Calu3 (cell line): ENCODE measurements at regions of chrX and their contacts with region 1.

Region 1: DNA sequence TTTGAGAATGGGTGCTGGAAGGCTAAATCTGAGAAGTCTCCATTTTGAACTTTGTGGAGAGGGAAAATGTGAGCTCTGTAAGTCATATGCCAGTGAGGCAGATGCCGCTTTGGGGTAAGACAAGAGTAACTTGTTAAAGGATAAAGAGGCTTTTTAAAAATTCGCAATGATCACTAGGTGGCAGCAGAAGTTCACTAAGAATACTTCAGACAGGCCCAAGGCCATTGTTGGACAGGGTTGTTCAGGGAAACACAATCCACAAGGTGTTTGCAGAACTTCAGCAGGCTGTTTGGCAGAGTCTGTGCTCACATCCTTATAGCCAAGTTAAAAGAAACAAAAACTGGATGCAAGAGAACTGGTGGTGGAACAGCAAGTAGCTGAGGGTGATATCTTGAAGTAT is 13.7 kb upstream of the PIGA start:
- DNase-seq: peak; percentile 37
- H3K4me3 Mint-ChIP-seq: no peak overlapping the region
- H3K27ac Mint-ChIP-seq: no peak overlapping the region
- H3K4me1 Mint-ChIP-seq: no peaks in the 10 kb centered on the region
- H3K27me3 Mint-ChIP-seq: no peaks in the 10 kb centered on the region
- CTCF ChIP-seq: peak; percentile 36

Region 2: DNA sequence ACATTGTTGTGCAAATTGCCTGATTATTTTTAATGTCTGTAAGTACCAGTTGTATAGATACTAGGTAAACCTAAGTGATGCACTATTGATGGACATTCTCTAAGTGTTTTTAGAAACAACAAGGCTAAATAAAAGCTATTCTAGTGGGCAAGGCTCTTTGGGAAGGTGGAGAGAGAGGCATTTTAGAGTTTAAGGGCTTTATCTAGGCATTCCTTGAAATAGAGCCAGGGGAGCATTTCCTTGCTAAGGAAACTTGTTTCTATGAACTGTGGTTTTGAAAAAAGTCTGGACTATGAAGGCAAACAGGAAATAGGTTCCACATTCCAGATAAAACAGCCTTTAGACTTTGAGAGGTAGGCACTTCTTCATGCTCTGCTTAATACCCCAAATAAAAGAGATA is 175.4 kb after region 1 on chrX:
- CTCF ChIA-PET with region 1: no interaction called
- intact Hi-C with region 1: no loop called
- DNase-seq: no peak
- H3K4me3 Mint-ChIP-seq: no peak overlapping the region
- H3K27ac Mint-ChIP-seq: no peak overlapping the region
- H3K4me1 Mint-ChIP-seq: peaks cover 34% of the 10 kb centered on the region
- H3K27me3 Mint-ChIP-seq: no peaks in the 10 kb centered on the region
- CTCF ChIP-seq: no peak

Region 3: GRCh38 chrX:15564981-15565579 is 216.0 kb after region 1 on chrX:
- CTCF ChIA-PET with region 1: no interaction called
- intact Hi-C with region 1: loop called (anchors 10 kb)
- DNase-seq: peak; percentile 70
- H3K4me3 Mint-ChIP-seq: no peak overlapping the region
- H3K27ac Mint-ChIP-seq: peak overlapping the region; percentile 47
- H3K4me1 Mint-ChIP-seq: peaks cover 14% of the 10 kb centered on the region
- H3K27me3 Mint-ChIP-seq: no peaks in the 10 kb centered on the region
- CTCF ChIP-seq: peak; percentile 29